PC-9 (cell line): ENCODE measurements at regions of chr6 and their contacts with region 1.

Region 1: DNA sequence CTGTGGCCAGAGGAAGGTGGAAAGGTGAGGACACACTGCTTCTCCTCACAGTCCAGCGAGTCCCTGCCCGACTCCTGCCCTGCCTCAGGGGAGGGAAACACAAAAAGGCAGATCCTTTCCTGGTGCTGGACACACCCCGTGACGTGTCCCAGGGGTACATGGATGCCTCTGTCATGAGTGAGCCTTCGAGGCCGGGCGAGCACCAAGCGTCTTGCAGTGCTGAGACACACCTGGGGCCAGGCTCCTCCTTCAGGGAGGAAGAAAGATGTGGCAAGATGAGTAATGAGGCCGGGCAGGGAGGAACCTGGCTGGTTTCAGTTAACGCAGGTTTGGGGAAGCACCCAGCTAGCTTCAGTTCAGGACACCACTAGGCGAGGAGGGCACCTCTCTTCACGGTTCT is 215.1 kb downstream of the LY86 start:
- DNase-seq: peak; percentile 94 to 97
- H3K4me3 ChIP-seq: no peak overlapping the region
- H3K27ac ChIP-seq: peak overlapping the region; percentile 98
- H3K4me1 ChIP-seq: peaks cover 29% of the 10 kb centered on the region
- H3K27me3 ChIP-seq: no peaks in the 10 kb centered on the region
- CTCF ChIP-seq: no peak

Region 2: GRCh38 chr6:6730831-6731230 is 72.7 kb before region 1 on chr6:
- CTCF ChIA-PET with region 1: no interaction called
- POLR2A ChIA-PET with region 1: no interaction called
- intact Hi-C with region 1: loop called (anchors 5 kb)
- DNase-seq: peak in 1 of 2 experiments; percentile 17
- H3K4me3 ChIP-seq: no peak overlapping the region
- H3K27ac ChIP-seq: no peak overlapping the region
- H3K4me1 ChIP-seq: peaks cover 17% of the 10 kb centered on the region
- H3K27me3 ChIP-seq: no peaks in the 10 kb centered on the region
- CTCF ChIP-seq: no peak

Region 3: GRCh38 chr6:6927521-6928371 is 124.2 kb after region 1 on chr6:
- CTCF ChIA-PET with region 1: no interaction called
- POLR2A ChIA-PET with region 1: no interaction called
- intact Hi-C with region 1: loop called (anchors 2 kb)
- DNase-seq: peak in 1 of 2 experiments; percentile 28
- H3K4me3 ChIP-seq: no peak overlapping the region
- H3K27ac ChIP-seq: no peak overlapping the region
- H3K4me1 ChIP-seq: peaks cover 6% of the 10 kb centered on the region
- H3K27me3 ChIP-seq: no peaks in the 10 kb centered on the region
- CTCF ChIP-seq: no peak

Region 4: DNA sequence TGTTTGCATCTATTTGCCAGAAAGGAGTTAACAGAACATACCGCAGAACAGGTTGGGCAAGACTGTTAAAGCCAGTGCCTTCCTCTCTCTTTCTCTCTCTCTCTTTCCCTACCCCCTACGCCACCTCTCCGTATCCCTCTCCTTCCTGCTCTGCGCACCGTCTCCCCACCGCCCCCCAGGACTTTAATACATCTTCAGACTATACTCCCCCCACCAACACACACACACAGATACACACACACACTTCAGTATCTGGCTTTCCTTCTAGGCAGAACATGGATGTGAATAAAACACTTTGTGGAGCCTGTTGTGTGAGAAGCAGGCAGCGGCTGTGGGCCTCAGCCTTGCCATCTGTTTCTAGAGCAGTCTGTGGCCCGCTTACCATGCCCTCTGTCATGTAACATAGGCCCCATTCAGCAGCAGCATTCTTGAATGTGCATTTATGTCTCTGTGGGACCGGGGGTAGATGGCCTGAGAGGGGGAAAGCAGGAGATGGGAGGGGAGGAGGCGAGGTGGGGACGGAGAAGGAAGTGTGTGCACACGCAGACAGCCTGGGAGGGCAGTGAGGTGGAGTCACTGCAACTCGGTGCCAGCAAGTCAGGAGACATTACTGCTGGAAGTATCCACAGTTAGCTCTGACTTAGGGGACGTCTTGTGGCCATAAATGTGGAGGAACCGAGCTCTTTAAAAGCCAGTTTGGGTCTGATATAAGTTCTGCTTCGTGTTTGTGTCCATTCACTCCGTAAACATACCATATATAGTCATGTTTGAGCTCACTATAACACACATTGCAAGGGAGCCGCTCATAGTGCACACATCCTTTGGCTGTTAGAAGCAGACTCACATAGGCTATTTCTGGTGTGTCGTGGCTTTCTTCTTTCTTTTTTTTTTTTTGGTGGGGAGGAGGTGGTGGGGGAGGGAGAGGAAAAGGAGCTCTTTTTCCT is 342.6 kb after region 1 on chr6:
- CTCF ChIA-PET with region 1: no interaction called
- POLR2A ChIA-PET with region 1: no interaction called
- intact Hi-C with region 1: loop called (anchors 5 kb)
- DNase-seq: peak; percentile 60 to 72
- H3K4me3 ChIP-seq: peak overlapping the region; percentile 66
- H3K27ac ChIP-seq: peak overlapping the region; percentile 91
- H3K4me1 ChIP-seq: peaks cover 72% of the 10 kb centered on the region
- H3K27me3 ChIP-seq: no peaks in the 10 kb centered on the region
- CTCF ChIP-seq: no peak

Region 5: GRCh38 chr6:8113131-8113654 is 1309.6 kb after region 1 on chr6:
- CTCF ChIA-PET with region 1: no interaction called
- POLR2A ChIA-PET with region 1: no interaction called
- intact Hi-C with region 1: no loop called
- DNase-seq: no peak
- H3K4me3 ChIP-seq: no peak overlapping the region
- H3K27ac ChIP-seq: no peak overlapping the region
- H3K4me1 ChIP-seq: peaks cover 10% of the 10 kb centered on the region
- H3K27me3 ChIP-seq: no peaks in the 10 kb centered on the region
- CTCF ChIP-seq: no peak